ENCODE measurements at regions of chr1 and their contacts with region 1.

Region 1: GRCh38 chr1:47997289-47998200 is at the start of gene TRABD2B:
- DNase-seq: peak; percentile 50
- H3K4me3 ChIP-seq: peak within 1 kb of the TSS in 1 of 3 experiments; percentile 39
- H3K27ac ChIP-seq: no peak within 1 kb of the TSS
- H3K4me1 ChIP-seq: peaks cover 4% of the 10 kb centered on the region
- H3K27me3 ChIP-seq: peaks cover 25 to 35% of the 10 kb centered on the region in 2 experiments
- CTCF ChIP-seq: peak; percentile 91 to 94
- POLR2A ChIP-seq: no peak
- total RNA-seq, gene TRABD2B: not detected in 2 replicates

Region 2: GRCh38 chr1:47627471-47628370 is 369.8 kb before region 1 on chr1:
- CTCF ChIA-PET with region 1: no interaction called
- POLR2A ChIA-PET with region 1: no interaction called
- dilution Hi-C with region 1: no loop called
- intact Hi-C with region 1: no loop called
- DNase-seq: no peak
- H3K4me3 ChIP-seq: no peak overlapping the region
- H3K27ac ChIP-seq: no peak overlapping the region
- H3K4me1 ChIP-seq: no peaks in the 10 kb centered on the region
- H3K27me3 ChIP-seq: peaks cover 2% of the 10 kb centered on the region in 2 experiments
- CTCF ChIP-seq: no peak
- POLR2A ChIP-seq: no peak

Region 3: GRCh38 chr1:47738560-47739182 is 258.9 kb before region 1 on chr1:
- CTCF ChIA-PET with region 1: interaction called, 9 read pairs
- POLR2A ChIA-PET with region 1: no interaction called
- dilution Hi-C with region 1: no loop called
- intact Hi-C with region 1: loop called (anchors 1 kb)
- DNase-seq: peak; percentile 42
- H3K4me3 ChIP-seq: no peak overlapping the region
- H3K27ac ChIP-seq: no peak overlapping the region
- H3K4me1 ChIP-seq: no peaks in the 10 kb centered on the region
- H3K27me3 ChIP-seq: peaks cover 8 to 13% of the 10 kb centered on the region in 2 experiments
- CTCF ChIP-seq: peak; percentile 61 to 84
- POLR2A ChIP-seq: no peak

Region 4: GRCh38 chr1:47986761-47987200 is 10.8 kb before region 1 on chr1:
- CTCF ChIA-PET with region 1: interaction called, 23 read pairs
- POLR2A ChIA-PET with region 1: no interaction called
- dilution Hi-C with region 1: no loop called
- intact Hi-C with region 1: no loop called
- DNase-seq: no peak
- H3K4me3 ChIP-seq: no peak overlapping the region
- H3K27ac ChIP-seq: no peak overlapping the region
- H3K4me1 ChIP-seq: no peaks in the 10 kb centered on the region
- H3K27me3 ChIP-seq: peaks cover 14 to 16% of the 10 kb centered on the region in 2 experiments
- CTCF ChIP-seq: no peak
- POLR2A ChIP-seq: no peak

Region 5: GRCh38 chr1:48019714-48020315 is 22.3 kb after region 1 on chr1:
- CTCF ChIA-PET with region 1: interaction called, 11 read pairs
- POLR2A ChIA-PET with region 1: no interaction called
- dilution Hi-C with region 1: no loop called
- intact Hi-C with region 1: no loop called
- DNase-seq: no peak
- H3K4me3 ChIP-seq: no peak overlapping the region
- H3K27ac ChIP-seq: no peak overlapping the region
- H3K4me1 ChIP-seq: no peaks in the 10 kb centered on the region
- H3K27me3 ChIP-seq: peaks cover 0 to 7% of the 10 kb centered on the region in 2 experiments
- CTCF ChIP-seq: no peak
- POLR2A ChIP-seq: no peak

Region 6: GRCh38 chr1:48061162-48062136 is 63.9 kb after region 1 on chr1:
- CTCF ChIA-PET with region 1: interaction called, 27 read pairs
- POLR2A ChIA-PET with region 1: no interaction called
- dilution Hi-C with region 1: no loop called
- intact Hi-C with region 1: loop called (anchors 1 kb)
- DNase-seq: peak; percentile 61
- H3K4me3 ChIP-seq: no peak overlapping the region
- H3K27ac ChIP-seq: no peak overlapping the region
- H3K4me1 ChIP-seq: no peaks in the 10 kb centered on the region
- H3K27me3 ChIP-seq: no peaks in the 10 kb centered on the region
- CTCF ChIP-seq: peak; percentile 48 to 56
- POLR2A ChIP-seq: no peak

Region 7: GRCh38 chr1:48629867-48630266 is 632.3 kb after region 1 on chr1:
- CTCF ChIA-PET with region 1: no interaction called
- POLR2A ChIA-PET with region 1: no interaction called
- dilution Hi-C with region 1: no loop called
- intact Hi-C with region 1: no loop called
- DNase-seq: no peak
- H3K4me3 ChIP-seq: no peak overlapping the region
- H3K27ac ChIP-seq: no peak overlapping the region
- H3K4me1 ChIP-seq: no peaks in the 10 kb centered on the region
- H3K27me3 ChIP-seq: no peaks in the 10 kb centered on the region
- CTCF ChIP-seq: no peak
- POLR2A ChIP-seq: no peak

Measured in endothelial cell of umbilical vein (primary cell).